T-cell (primary cell): ENCODE measurements at regions of chr6 and their contacts with region 1.

Region 1: DNA sequence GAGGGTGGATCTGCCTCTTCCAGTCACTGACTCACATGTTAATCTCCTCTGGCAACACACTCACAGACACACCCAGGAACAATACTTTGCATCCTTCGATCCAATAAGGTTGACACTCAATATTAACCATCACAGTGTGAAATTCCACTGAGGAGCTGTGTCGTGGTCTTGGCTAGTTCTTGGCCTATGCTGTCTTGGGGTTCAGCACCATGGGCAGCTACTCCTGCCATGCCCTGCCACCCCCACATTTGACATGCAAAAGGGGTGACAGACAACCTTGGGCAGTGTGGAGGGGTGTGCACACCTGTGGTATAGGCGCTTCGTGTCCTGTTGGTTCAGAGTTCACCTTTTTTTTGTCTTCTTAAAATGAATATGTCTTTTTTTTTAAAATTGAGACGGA is 25.8 kb downstream of the ANKRD6 start:
- DNase-seq: no peak
- ATAC-seq: no peak
- H3K4me3 ChIP-seq: no peak overlapping the region
- H3K4me3 Mint-ChIP-seq: no peak overlapping the region
- H3K27ac ChIP-seq: no peak overlapping the region
- H3K27ac Mint-ChIP-seq: no peak overlapping the region
- H3K4me1 ChIP-seq: no peaks in the 10 kb centered on the region
- H3K4me1 Mint-ChIP-seq: no peaks in the 10 kb centered on the region
- H3K27me3 ChIP-seq: no peaks in the 10 kb centered on the region
- H3K27me3 Mint-ChIP-seq: no peaks in the 10 kb centered on the region

Region 2: GRCh38 chr6:89186762-89187161 is 271.9 kb before region 1 on chr6:
- CTCF ChIA-PET with region 1: interaction called in 1 of 2 experiments, 10 read pairs
- POLR2A ChIA-PET with region 1: no interaction called
- DNase-seq: no peak
- ATAC-seq: no peak
- H3K4me3 ChIP-seq: no peak overlapping the region
- H3K4me3 Mint-ChIP-seq: no peak overlapping the region
- H3K27ac ChIP-seq: no peak overlapping the region
- H3K27ac Mint-ChIP-seq: no peak overlapping the region
- H3K4me1 ChIP-seq: no peaks in the 10 kb centered on the region
- H3K4me1 Mint-ChIP-seq: no peaks in the 10 kb centered on the region
- H3K27me3 ChIP-seq: peaks cover 0 to 11% of the 10 kb centered on the region in 2 experiments
- H3K27me3 Mint-ChIP-seq: peaks cover 6 to 18% of the 10 kb centered on the region in 2 donors